Prostate gland (tissue), 2 donors: ENCODE measurements at regions of chr11 and their contacts with region 1.

Region 1: DNA sequence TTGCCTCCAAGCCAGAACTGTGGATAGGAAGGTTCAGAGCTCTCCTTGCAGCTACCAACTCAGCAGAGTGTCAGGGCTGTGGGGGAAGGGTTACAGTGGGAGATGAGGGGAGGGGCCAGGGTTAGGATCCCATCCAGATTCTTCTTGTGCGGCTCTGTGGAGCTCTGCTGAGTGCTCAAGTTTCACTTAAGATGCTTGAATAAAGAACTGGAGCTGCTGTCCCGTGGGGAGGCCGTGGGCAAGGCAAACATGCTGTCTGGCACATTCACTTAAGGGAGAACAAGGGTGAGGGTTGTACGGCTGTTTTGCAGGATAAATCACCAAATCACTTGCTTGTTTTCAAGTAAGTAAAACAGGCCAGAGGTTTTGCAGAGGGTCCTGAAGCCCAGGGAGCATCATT is 197.1 kb downstream of the FAM76B start:
- DNase-seq: no peak
- H3K4me3 ChIP-seq: no peak overlapping the region
- H3K27ac ChIP-seq: no peak overlapping the region
- H3K4me1 ChIP-seq: no peaks in the 10 kb centered on the region
- H3K27me3 ChIP-seq: no peaks in the 10 kb centered on the region
- CTCF ChIP-seq: no peak
- POLR2A ChIP-seq: no peak

Region 2: GRCh38 chr11:95545116-95545875 is 47.2 kb before region 1 on chr11:
- intact Hi-C with region 1: no loop called
- DNase-seq: no peak
- H3K4me3 ChIP-seq: no peak overlapping the region
- H3K27ac ChIP-seq: no peak overlapping the region
- H3K4me1 ChIP-seq: no peaks in the 10 kb centered on the region
- H3K27me3 ChIP-seq: no peaks in the 10 kb centered on the region
- CTCF ChIP-seq: no peak
- POLR2A ChIP-seq: no peak

Region 3: GRCh38 chr11:95641495-95641894 is 49.0 kb after region 1 on chr11:
- intact Hi-C with region 1: loop called (anchors 10 kb)
- DNase-seq: no peak
- H3K4me3 ChIP-seq: no peak overlapping the region
- H3K27ac ChIP-seq: no peak overlapping the region
- H3K4me1 ChIP-seq: no peaks in the 10 kb centered on the region
- H3K27me3 ChIP-seq: no peaks in the 10 kb centered on the region
- CTCF ChIP-seq: no peak
- POLR2A ChIP-seq: no peak